Posterior cingulate gyrus (tissue), 11 donors: ENCODE measurements at regions of chr16 and their contacts with region 1.

Region 1: GRCh38 chr16:19086322-19087199 is 19.1 kb downstream of the COQ7 start:
- DNase-seq: peak; percentile 58 to 97 (median 82)

Region 2: GRCh38 chr16:18983565-18984424 is 102.8 kb before region 1 on chr16 and contains the start of gene TMC7:
- intact Hi-C with region 1: loop called (anchors 5 kb)
- DNase-seq: peak; percentile 82 to 99 (median 94)

Region 3: DNA sequence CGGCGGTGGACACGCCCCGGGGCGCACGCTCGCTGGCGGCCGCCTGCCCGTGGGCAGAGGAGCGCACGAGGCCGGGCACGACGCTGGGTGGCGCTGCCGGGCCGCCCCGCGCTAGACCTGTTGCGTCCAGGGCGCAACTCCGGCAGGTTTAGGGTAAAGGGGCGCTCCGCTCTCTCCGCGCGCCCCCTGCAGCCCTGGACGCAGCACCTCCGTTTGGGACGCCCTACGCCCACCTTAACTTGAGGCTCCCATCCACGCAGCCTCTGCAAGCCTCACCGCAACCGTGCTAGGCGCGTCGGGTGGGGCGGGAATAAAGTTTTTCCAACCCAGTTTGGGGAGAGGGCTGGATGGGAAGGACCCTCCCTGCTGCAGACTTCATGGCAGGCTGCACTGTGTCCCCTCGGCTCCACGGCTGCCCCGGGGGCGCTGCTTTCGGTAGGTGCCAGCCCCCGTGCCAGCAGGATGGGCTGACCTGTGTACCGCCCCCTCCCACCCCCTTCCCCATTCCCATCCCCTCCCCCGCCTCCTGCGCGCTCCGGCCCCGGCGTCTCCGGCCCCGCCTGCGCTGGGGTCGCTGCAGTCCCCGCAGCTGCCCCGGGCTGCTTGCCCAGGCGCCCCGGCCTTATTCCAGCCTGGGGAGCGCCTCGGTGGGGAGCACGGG is 81.3 kb after region 1 on chr16 and contains the start of gene SYT17:
- intact Hi-C with region 1: loop called (anchors 5 kb)
- DNase-seq: peak in 9 of 10 donors; percentile 28 to 94 (median 52)

Region 4: DNA sequence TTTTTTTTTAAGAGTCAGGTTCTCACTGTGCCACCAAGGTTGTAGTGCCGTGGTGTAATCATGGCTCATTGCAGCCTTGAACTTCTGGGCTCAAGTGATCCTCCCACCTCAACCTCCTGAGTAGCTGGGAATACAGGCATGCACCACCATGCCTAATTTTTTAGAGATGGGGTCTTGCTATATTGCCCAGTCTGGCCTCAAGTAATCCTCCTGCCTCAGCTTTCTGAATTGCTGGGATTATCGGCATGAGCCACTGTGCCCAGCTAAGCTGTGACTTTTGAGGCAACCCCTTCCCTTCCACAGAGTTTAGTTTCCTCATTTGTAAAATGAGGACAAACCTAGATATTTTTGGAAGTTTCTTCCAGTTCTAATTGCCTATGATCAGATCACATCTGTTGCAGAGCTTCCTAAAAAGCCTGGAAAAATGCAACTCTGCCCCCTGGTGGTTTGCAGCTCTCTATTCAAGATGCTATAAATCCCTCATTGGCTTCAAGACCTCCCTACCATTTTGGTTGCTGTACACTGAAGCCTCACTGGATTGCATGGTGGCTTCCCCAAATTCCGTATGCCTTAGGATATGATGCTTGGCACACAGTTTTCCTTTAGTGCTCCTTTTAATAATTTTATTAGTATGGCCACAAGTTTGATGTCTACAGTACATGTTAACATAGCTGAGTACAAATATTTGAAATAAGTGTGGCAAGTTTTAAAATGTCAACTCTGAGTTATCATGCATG is 416.0 kb after region 1 on chr16:
- intact Hi-C with region 1: loop called (anchors 1 kb)
- DNase-seq: peak in 8 of 10 donors; percentile 53 to 94 (median 82)

Region 5: GRCh38 chr16:20191566-20191965 is 1105.0 kb after region 1 on chr16:
- intact Hi-C with region 1: no loop called
- DNase-seq: no peak